ENCODE measurements at regions of chr1 and their contacts with region 1.

Region 1: GRCh38 chr1:204104133-204104871 is 31.4 kb downstream of the SOX13 start:
- DNase-seq: peak in 2 of 35 experiments; percentile 18 to 24
- ATAC-seq: peak; percentile 24 to 66 (median 49)
- H3K4me3 ChIP-seq: no peak overlapping the region
- H3K4me3 Mint-ChIP-seq: peak overlapping the region; percentile 6 to 55 (median 38)
- H3K27ac ChIP-seq: peak overlapping the region; percentile 72
- H3K27ac Mint-ChIP-seq: peak overlapping the region; percentile 87 to 92
- H3K4me1 ChIP-seq: peaks cover 0 to 56% of the 10 kb centered on the region in 2 experiments
- H3K4me1 Mint-ChIP-seq: peaks cover 25 to 53% (median 31%) of the 10 kb centered on the region in 3 donors
- H3K27me3 ChIP-seq: peaks cover 0 to 6% of the 10 kb centered on the region in 2 experiments
- H3K27me3 Mint-ChIP-seq: peaks cover 3 to 4% of the 10 kb centered on the region in 2 donors

Region 2: GRCh38 chr1:204115116-204115515 is 10.8 kb after region 1 on chr1:
- CTCF ChIA-PET with region 1: interaction called, 3 read pairs
- POLR2A ChIA-PET with region 1: interaction called in 1 of 2 experiments, 10 read pairs
- DNase-seq: no peak
- ATAC-seq: no peak
- H3K4me3 ChIP-seq: no peak overlapping the region
- H3K4me3 Mint-ChIP-seq: no peak overlapping the region
- H3K27ac ChIP-seq: no peak overlapping the region
- H3K27ac Mint-ChIP-seq: no peak overlapping the region
- H3K4me1 ChIP-seq: no peaks in the 10 kb centered on the region
- H3K4me1 Mint-ChIP-seq: peaks cover 0 to 3% (median 0%) of the 10 kb centered on the region in 3 donors
- H3K27me3 ChIP-seq: no peaks in the 10 kb centered on the region
- H3K27me3 Mint-ChIP-seq: no peaks in the 10 kb centered on the region

Region 3: GRCh38 chr1:204141124-204141523 is 36.8 kb after region 1 on chr1:
- CTCF ChIA-PET with region 1: no interaction called
- POLR2A ChIA-PET with region 1: interaction called in 1 of 2 experiments, 10 read pairs
- DNase-seq: no peak
- ATAC-seq: no peak
- H3K4me3 ChIP-seq: no peak overlapping the region
- H3K4me3 Mint-ChIP-seq: no peak overlapping the region
- H3K27ac ChIP-seq: no peak overlapping the region
- H3K27ac Mint-ChIP-seq: no peak overlapping the region
- H3K4me1 ChIP-seq: no peaks in the 10 kb centered on the region
- H3K4me1 Mint-ChIP-seq: no peaks in the 10 kb centered on the region
- H3K27me3 ChIP-seq: no peaks in the 10 kb centered on the region
- H3K27me3 Mint-ChIP-seq: no peaks in the 10 kb centered on the region

Region 4: DNA sequence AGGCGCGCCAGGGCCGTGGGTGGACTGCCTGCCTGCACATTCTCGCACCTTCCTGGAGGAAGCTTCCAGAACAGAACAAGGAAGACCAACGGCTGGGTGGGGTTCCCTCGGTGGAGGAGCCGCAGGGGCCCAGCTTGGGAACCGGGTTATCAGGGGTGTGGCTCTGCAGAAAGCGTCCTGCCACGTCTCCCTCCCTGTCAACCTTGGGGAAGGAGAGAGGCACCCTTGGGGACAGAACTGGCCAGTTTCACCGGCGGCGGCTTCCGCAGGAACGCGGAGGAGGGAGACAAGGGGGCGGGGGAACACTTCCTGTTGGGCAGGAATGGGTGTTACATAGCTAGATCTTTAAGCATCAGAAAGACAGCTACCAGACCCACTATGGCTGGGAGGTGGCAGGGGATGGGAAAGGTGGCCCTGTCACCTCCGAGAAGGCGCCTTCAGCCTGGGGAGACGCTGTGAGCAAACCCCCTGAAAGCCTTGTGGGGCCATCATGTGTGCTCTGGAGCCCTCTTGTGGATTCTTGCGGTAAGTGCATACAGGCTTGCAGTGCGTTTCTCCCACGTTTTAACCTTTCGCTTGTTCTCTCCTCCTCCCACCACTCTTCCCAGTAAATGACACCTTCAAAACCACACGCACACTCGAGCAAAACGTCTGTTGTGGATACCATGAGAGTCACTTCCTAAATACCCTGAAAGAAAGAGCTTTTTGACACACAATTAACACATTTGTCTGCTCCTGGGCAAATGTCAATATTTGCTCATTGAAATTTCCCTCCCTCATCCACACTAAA is 259.2 kb after region 1 on chr1:
- CTCF ChIA-PET with region 1: no interaction called
- POLR2A ChIA-PET with region 1: no interaction called
- DNase-seq: peak; percentile 50 to 90 (median 66)
- ATAC-seq: peak; percentile 85 to 92 (median 90)
- H3K4me3 ChIP-seq: peak overlapping the region; percentile 54 to 57
- H3K4me3 Mint-ChIP-seq: peak overlapping the region; percentile 42 to 83 (median 72)
- H3K27ac ChIP-seq: peak overlapping the region; percentile 20
- H3K27ac Mint-ChIP-seq: peak overlapping the region; percentile 59 to 85
- H3K4me1 ChIP-seq: peaks cover 0 to 17% of the 10 kb centered on the region in 2 experiments
- H3K4me1 Mint-ChIP-seq: peaks cover 9 to 16% (median 12%) of the 10 kb centered on the region in 3 donors
- H3K27me3 ChIP-seq: peaks cover 0 to 33% of the 10 kb centered on the region in 2 experiments
- H3K27me3 Mint-ChIP-seq: peaks cover 5 to 9% of the 10 kb centered on the region in 2 donors

Measured in T-cell (primary cell).